ENCODE measurements at regions of chr7 and their contacts with region 1.

Region 1: GRCh38 chr7:17304926-17305325 is 6.5 kb downstream of the AHR start:
- DNase-seq: peak; percentile 94
- H3K4me3 Mint-ChIP-seq: peak overlapping the region; percentile 70
- H3K27ac Mint-ChIP-seq: peak overlapping the region; percentile 85
- H3K4me1 Mint-ChIP-seq: peaks cover 23% of the 10 kb centered on the region
- H3K27me3 Mint-ChIP-seq: no peaks in the 10 kb centered on the region
- CTCF ChIP-seq: no peak

Region 2: DNA sequence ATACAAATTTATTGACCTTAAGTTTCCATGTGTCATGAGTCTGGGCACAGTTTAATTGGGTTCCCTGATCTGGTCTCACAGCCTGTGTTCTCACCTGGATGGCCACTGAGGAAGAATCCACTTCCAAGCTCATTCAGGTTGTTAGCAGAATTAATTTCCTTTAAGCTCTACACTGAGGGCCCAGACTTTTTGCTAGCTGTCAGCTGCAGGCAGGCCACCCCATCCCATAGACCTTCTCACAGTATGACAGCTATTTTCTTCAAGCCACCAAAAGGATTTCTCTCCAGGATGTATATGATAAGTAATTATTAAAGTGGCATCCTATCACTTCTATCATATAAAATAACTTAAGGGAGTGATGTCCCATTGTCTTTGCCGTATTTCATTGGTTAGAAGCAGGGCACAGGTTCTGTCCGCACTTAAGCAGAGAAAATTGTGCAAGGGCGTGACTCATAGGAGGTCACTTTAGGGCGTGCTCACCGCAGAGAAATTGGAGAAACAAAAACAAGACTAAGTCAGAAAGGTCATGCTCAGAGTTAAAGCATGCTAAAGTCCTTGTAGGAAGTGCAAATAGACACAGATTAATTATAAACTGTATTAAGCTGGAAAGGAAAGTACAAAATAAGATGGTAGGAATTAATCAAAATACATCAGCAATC is 103.4 kb after region 1 on chr7:
- CTCF ChIA-PET with region 1: interaction called, 5 read pairs
- POLR2A ChIA-PET with region 1: interaction called, 13 read pairs
- intact Hi-C with region 1: loop called (anchors 2 kb)
- DNase-seq: peak; percentile 97
- H3K4me3 Mint-ChIP-seq: peak overlapping the region; percentile 48
- H3K27ac Mint-ChIP-seq: peak overlapping the region; percentile 90
- H3K4me1 Mint-ChIP-seq: peaks cover 34% of the 10 kb centered on the region
- H3K27me3 Mint-ChIP-seq: no peaks in the 10 kb centered on the region
- CTCF ChIP-seq: no peak

Region 3: GRCh38 chr7:17523813-17524741 is 219.2 kb after region 1 on chr7:
- CTCF ChIA-PET with region 1: interaction called, 7 read pairs
- POLR2A ChIA-PET with region 1: interaction called, 20 read pairs
- intact Hi-C with region 1: no loop called
- DNase-seq: peak; percentile 96
- H3K4me3 Mint-ChIP-seq: peak overlapping the region; percentile 19
- H3K27ac Mint-ChIP-seq: peak overlapping the region; percentile 83
- H3K4me1 Mint-ChIP-seq: peaks cover 50% of the 10 kb centered on the region
- H3K27me3 Mint-ChIP-seq: no peaks in the 10 kb centered on the region
- CTCF ChIP-seq: no peak

Region 4: DNA sequence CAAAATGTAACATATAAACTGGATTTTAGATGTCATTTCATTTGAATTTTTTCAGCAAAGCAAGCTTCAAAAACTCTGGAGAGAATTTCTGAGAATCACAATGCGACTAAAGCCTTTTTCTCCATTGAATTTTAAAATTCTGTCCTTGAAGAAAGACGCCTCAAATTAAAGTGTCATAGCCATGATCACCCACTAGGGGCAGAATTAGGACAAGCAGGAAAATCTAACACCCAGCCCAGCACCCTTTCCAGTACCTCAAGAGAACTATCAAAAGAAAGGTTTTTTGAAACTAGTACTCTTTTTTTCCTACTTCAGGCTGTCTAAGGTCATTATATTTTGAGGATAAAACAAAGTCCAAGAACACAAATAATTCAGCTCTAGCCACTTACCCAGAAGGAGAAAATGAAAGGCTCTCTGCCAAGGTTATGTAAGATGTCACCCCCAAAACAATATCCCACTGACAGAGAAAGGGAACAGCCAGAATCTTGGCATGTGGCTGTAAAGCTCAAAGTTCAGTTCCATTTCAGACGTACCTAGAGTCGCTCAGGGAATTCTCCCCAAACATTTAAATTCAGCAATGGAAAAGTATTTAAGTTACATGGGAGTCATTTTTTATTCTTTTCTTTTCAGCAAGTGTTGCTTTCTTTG is 335.9 kb after region 1 on chr7:
- CTCF ChIA-PET with region 1: interaction called, 23 read pairs
- POLR2A ChIA-PET with region 1: interaction called, 15 read pairs
- intact Hi-C with region 1: loop called (anchors 1 kb)
- DNase-seq: peak; percentile 66
- H3K4me3 Mint-ChIP-seq: no peak overlapping the region
- H3K27ac Mint-ChIP-seq: no peak overlapping the region
- H3K4me1 Mint-ChIP-seq: peaks cover 19% of the 10 kb centered on the region
- H3K27me3 Mint-ChIP-seq: no peaks in the 10 kb centered on the region
- CTCF ChIP-seq: peak; percentile 48

Measured in MCF 10A (cell line).